Naive thymus-derived CD4-positive, alpha-beta T cell (primary cell): ENCODE measurements at regions of chr6 and their contacts with region 1.

Region 1: GRCh38 chr6:43013843-43014433 is at the starts of genes KLHDC3 and MEA1:
- DNase-seq: peak; percentile 83 to 100 (median 99)
- ATAC-seq: peak; percentile 98
- H3K4me3 ChIP-seq: peak within 1 kb of the TSS; percentile 73
- H3K4me3 Mint-ChIP-seq: peak within 1 kb of the TSS; percentile 85 to 99 (median 92)
- H3K27ac ChIP-seq: peak within 1 kb of the TSS; percentile 84
- H3K27ac Mint-ChIP-seq: peak within 1 kb of the TSS; percentile 82 to 97 (median 92)
- H3K4me1 ChIP-seq: peaks cover 20 to 31% of the 10 kb centered on the region in 2 donors
- H3K4me1 Mint-ChIP-seq: peaks cover 45 to 78% (median 58%) of the 10 kb centered on the region in 7 donors
- H3K27me3 ChIP-seq: no peaks in the 10 kb centered on the region
- H3K27me3 Mint-ChIP-seq: peaks cover 0 to 3% (median 0%) of the 10 kb centered on the region in 5 donors
- total RNA-seq, gene KLHDC3: 39.9 to 76.9 (median 67.4) TPM
- total RNA-seq, gene MEA1: 20.3 to 58.0 (median 32.7) TPM

Region 2: GRCh38 chr6:42963855-42964605 is 49.9 kb before region 1 on chr6:
- CTCF ChIA-PET with region 1: no interaction called
- POLR2A ChIA-PET with region 1: no interaction called
- intact Hi-C with region 1: no loop called
- DNase-seq: peak in 5 of 9 donors; percentile 14 to 46 (median 23)
- ATAC-seq: peak; percentile 43
- H3K4me3 ChIP-seq: no peak overlapping the region
- H3K4me3 Mint-ChIP-seq: no peak overlapping the region
- H3K27ac ChIP-seq: no peak overlapping the region
- H3K27ac Mint-ChIP-seq: no peak overlapping the region
- H3K4me1 ChIP-seq: peaks cover 0 to 5% of the 10 kb centered on the region in 2 donors
- H3K4me1 Mint-ChIP-seq: peaks cover 0 to 24% (median 16%) of the 10 kb centered on the region in 7 donors
- H3K27me3 ChIP-seq: no peaks in the 10 kb centered on the region
- H3K27me3 Mint-ChIP-seq: peaks cover 0 to 18% (median 0%) of the 10 kb centered on the region in 5 donors

Region 3: GRCh38 chr6:42978839-42979522 is 35.0 kb before region 1 on chr6 and contains the start of gene PEX6:
- CTCF ChIA-PET with region 1: no interaction called
- POLR2A ChIA-PET with region 1: interaction called, 70 read pairs
- intact Hi-C with region 1: loop called (anchors 1 kb)
- DNase-seq: peak; percentile 77 to 98 (median 93)
- ATAC-seq: peak; percentile 97
- H3K4me3 ChIP-seq: peak within 1 kb of the TSS; percentile 90
- H3K4me3 Mint-ChIP-seq: peak within 1 kb of the TSS; percentile 91 to 99 (median 94)
- H3K27ac ChIP-seq: peak within 1 kb of the TSS; percentile 85
- H3K27ac Mint-ChIP-seq: peak within 1 kb of the TSS; percentile 92 to 99 (median 98)
- H3K4me1 ChIP-seq: peaks cover 30 to 32% of the 10 kb centered on the region in 2 donors
- H3K4me1 Mint-ChIP-seq: peaks cover 19 to 61% (median 47%) of the 10 kb centered on the region in 7 donors
- H3K27me3 ChIP-seq: no peaks in the 10 kb centered on the region
- H3K27me3 Mint-ChIP-seq: no peaks in the 10 kb centered on the region
- total RNA-seq, gene PEX6: 14.1 to 42.3 (median 28.0) TPM

Region 4: DNA sequence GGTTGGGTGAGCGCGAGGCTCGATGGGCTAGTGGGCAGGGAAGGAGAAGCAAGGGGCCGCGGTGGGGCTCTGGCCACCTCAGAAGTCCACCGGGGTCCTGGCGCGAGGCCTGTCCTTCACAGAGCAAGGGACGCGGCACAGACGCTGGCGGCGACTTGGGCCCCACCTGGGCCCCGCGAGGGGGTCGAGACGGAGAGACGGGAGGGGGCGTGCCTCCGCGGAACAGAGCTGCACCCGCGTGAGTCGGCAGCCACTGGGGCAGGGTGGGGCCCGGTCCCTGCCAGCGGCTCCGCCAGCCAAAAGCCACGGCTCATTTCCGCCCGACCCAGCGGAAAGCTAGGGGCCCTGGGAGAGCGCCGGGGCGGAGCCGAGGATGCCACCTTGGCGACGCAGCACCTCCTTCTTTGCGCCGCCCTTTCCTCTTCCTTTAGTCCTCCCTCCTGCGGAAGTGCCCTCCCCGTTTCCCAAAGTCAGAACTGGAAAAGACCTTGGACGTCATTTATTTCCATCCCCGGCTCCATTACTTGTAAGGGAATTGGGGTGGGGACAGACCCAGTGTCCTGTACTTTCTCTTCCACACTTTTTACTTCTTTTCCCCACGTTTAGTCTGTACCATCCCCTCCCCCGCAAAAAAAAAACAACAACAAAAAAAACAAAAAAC is 39.7 kb after region 1 on chr6 and contains the start of gene CUL7:
- CTCF ChIA-PET with region 1: interaction called, 5 read pairs
- POLR2A ChIA-PET with region 1: interaction called, 37 read pairs
- intact Hi-C with region 1: loop called (anchors 1 kb)
- DNase-seq: peak; percentile 72 to 90 (median 88)
- ATAC-seq: peak; percentile 99
- H3K4me3 ChIP-seq: peak within 1 kb of the TSS; percentile 70
- H3K4me3 Mint-ChIP-seq: peak within 1 kb of the TSS; percentile 86 to 99 (median 94)
- H3K27ac ChIP-seq: peak within 1 kb of the TSS; percentile 89
- H3K27ac Mint-ChIP-seq: peak within 1 kb of the TSS; percentile 92 to 99 (median 97)
- H3K4me1 ChIP-seq: peaks cover 8 to 24% of the 10 kb centered on the region in 2 donors
- H3K4me1 Mint-ChIP-seq: peaks cover 37 to 58% (median 50%) of the 10 kb centered on the region in 7 donors
- H3K27me3 ChIP-seq: no peaks in the 10 kb centered on the region
- H3K27me3 Mint-ChIP-seq: no peaks in the 10 kb centered on the region
- total RNA-seq, gene CUL7: 9.8 to 14.5 (median 12.7) TPM

Region 5: DNA sequence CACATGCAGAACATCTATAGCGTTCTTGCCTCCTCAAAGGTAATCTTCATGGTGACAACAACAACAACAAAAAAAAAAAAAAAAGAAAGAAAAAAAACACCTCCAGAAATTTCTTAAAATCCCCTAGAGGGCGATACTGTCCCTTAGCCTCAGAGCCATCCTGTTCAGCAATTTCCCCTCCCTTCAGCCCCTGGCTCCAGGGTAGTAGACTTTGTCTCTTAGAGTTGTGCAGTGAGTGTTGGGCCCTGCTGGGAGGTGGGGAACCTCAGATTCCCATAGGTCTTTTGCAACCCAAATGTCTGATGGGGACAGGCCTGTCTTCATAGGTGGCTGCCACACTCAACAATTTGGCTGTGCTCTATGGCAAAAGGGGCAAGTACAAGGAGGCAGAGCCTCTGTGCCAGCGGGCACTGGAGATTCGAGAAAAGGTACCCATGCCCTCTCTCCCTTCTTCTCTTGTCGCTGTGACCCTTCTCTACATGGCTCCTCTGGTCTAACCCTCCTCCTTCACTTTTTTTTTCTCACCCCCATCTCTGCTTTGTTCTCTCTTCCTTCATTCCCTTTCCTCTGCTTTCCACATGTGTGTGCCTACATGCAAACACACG is 56.2 kb after region 1 on chr6:
- CTCF ChIA-PET with region 1: no interaction called
- POLR2A ChIA-PET with region 1: no interaction called
- intact Hi-C with region 1: no loop called
- DNase-seq: peak in 6 of 9 donors; percentile 15 to 42 (median 32)
- ATAC-seq: peak; percentile 75
- H3K4me3 ChIP-seq: no peak overlapping the region
- H3K4me3 Mint-ChIP-seq: no peak overlapping the region
- H3K27ac ChIP-seq: no peak overlapping the region
- H3K27ac Mint-ChIP-seq: no peak overlapping the region
- H3K4me1 ChIP-seq: no peaks in the 10 kb centered on the region
- H3K4me1 Mint-ChIP-seq: peaks cover 0 to 5% (median 0%) of the 10 kb centered on the region in 7 donors
- H3K27me3 ChIP-seq: no peaks in the 10 kb centered on the region
- H3K27me3 Mint-ChIP-seq: peaks cover 0 to 3% (median 0%) of the 10 kb centered on the region in 5 donors

Region 6: DNA sequence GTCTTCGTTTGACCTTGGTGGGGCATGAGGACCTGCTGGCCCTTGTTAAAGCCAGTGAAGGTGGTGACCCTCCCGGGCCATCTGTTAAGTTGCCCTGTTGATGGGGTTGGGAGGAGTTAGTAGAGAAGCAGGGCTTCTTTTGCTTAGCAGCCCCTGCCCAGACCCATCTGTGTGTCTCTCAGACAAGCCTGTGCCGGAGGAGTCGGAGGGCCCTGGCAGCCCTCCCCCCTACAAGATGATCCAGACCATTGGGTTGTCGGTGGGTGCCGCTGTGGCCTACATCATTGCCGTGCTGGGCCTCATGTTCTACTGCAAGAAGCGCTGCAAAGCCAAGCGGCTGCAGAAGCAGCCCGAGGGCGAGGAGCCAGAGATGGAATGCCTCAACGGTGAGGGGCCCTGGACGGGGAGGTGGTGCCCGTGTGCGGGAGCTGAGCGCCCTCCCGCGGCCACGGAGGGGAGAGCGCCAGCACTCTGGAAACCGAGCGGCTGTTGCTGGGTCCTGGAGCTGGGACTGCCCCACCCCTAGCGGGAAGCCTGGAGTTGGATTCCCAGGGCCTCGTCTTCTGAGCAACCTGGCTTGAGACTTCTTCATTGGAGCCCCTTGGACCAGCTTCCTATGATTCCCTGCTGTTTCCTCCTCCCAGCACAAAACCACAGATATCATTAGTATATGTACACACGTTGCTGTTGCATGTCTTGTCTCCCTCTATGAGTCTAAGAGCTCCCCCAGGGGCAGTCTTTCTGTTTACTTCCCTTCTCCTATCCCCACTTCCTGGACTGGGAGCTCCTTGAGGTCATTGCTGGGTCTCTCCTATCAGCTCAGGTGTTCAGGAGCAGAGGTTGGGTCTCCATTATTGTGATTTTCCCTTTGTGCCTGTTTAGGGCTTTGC is 129.5 kb after region 1 on chr6:
- CTCF ChIA-PET with region 1: interaction called, 4 read pairs
- POLR2A ChIA-PET with region 1: no interaction called
- intact Hi-C with region 1: loop called (anchors 1 to 2 kb)
- DNase-seq: peak; percentile 62 to 85 (median 76)
- ATAC-seq: peak; percentile 95
- H3K4me3 ChIP-seq: peak overlapping the region; percentile 0
- H3K4me3 Mint-ChIP-seq: peak overlapping the region in 8 of 10 donors; percentile 25 to 63 (median 38)
- H3K27ac ChIP-seq: no peak overlapping the region
- H3K27ac Mint-ChIP-seq: peak overlapping the region in 5 of 9 donors; percentile 30 to 86 (median 51)
- H3K4me1 ChIP-seq: peaks cover 11 to 21% of the 10 kb centered on the region in 2 donors
- H3K4me1 Mint-ChIP-seq: peaks cover 5 to 21% (median 16%) of the 10 kb centered on the region in 7 donors
- H3K27me3 ChIP-seq: no peaks in the 10 kb centered on the region
- H3K27me3 Mint-ChIP-seq: no peaks in the 10 kb centered on the region

Region 7: GRCh38 chr6:43369174-43370022 is 355.5 kb after region 1 on chr6 and contains the start of gene ZNF318:
- CTCF ChIA-PET with region 1: no interaction called
- POLR2A ChIA-PET with region 1: no interaction called
- intact Hi-C with region 1: loop called in 1 of 2 experiments (anchors 1 kb)
- DNase-seq: peak; percentile 85 to 95 (median 93)
- ATAC-seq: peak; percentile 97
- H3K4me3 ChIP-seq: peak within 1 kb of the TSS; percentile 90
- H3K4me3 Mint-ChIP-seq: peak within 1 kb of the TSS; percentile 75 to 97 (median 92)
- H3K27ac ChIP-seq: peak within 1 kb of the TSS; percentile 87
- H3K27ac Mint-ChIP-seq: peak within 1 kb of the TSS; percentile 91 to 98 (median 95)
- H3K4me1 ChIP-seq: peaks cover 20 to 23% of the 10 kb centered on the region in 2 donors
- H3K4me1 Mint-ChIP-seq: peaks cover 28 to 56% (median 50%) of the 10 kb centered on the region in 7 donors
- H3K27me3 ChIP-seq: no peaks in the 10 kb centered on the region
- H3K27me3 Mint-ChIP-seq: peaks cover 0 to 17% (median 0%) of the 10 kb centered on the region in 5 donors
- total RNA-seq, gene ZNF318: 15.8 to 40.2 (median 28.3) TPM

Region 8: DNA sequence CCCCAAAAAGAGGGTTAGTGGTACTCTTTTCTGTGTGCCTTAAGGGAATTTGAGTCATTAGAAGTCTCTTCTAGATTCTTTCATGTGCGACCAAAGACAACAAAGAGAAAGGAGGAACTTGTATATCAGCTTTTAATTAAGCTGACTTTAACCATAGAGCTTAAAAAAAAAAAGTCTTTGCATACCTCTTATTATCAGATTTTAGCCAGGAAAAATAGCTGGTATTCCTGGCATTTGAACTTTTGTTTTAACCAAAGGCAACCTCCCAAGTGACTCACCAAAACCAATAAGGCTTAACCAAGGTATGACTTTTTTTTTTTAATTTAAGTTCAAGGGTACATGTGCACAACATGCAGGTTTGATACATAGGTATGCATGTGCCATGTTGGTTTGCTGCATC is 1748.6 kb after region 1 on chr6:
- CTCF ChIA-PET with region 1: no interaction called
- POLR2A ChIA-PET with region 1: no interaction called
- intact Hi-C with region 1: no loop called
- DNase-seq: no peak
- ATAC-seq: no peak
- H3K4me3 ChIP-seq: no peak overlapping the region
- H3K4me3 Mint-ChIP-seq: no peak overlapping the region
- H3K27ac ChIP-seq: no peak overlapping the region
- H3K27ac Mint-ChIP-seq: no peak overlapping the region
- H3K4me1 ChIP-seq: no peaks in the 10 kb centered on the region
- H3K4me1 Mint-ChIP-seq: no peaks in the 10 kb centered on the region
- H3K27me3 ChIP-seq: no peaks in the 10 kb centered on the region
- H3K27me3 Mint-ChIP-seq: peaks cover 0 to 1% (median 0%) of the 10 kb centered on the region in 5 donors